ENCODE measurements at regions of chr9 and their contacts with region 1.

Region 1: DNA sequence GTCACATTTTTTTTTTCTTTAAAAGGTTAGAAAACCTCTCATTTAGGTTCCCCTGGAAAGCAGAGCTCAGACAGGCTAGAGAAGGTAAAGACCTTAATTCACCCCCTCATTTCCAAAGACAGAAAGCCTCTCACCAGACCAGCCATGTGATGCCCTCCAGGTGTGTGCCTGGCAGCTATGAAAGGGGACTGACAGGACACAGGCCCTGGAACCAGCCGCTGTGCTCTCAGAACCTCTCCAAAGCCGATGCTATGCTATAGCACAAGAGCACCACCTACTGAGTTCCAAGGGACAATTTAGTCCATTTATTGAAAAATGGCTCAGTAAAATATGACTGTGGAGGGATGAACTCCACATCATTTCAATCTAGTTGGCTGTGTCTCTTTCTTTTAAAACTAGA is 48.8 kb downstream of the FANCC start:
- DNase-seq: peak in 1 of 9 experiments; percentile 10
- ATAC-seq: no peak
- H3K4me3 ChIP-seq: no peak overlapping the region
- H3K4me3 Mint-ChIP-seq: no peak overlapping the region
- H3K27ac ChIP-seq: no peak overlapping the region
- H3K27ac Mint-ChIP-seq: no peak overlapping the region
- H3K4me1 ChIP-seq: no peaks in the 10 kb centered on the region
- H3K4me1 Mint-ChIP-seq: peaks cover 16% of the 10 kb centered on the region
- H3K27me3 ChIP-seq: no peaks in the 10 kb centered on the region
- H3K27me3 Mint-ChIP-seq: no peaks in the 10 kb centered on the region
- CTCF ChIP-seq: no peak

Region 2: GRCh38 chr9:95336281-95336680 is 67.6 kb after region 1 on chr9:
- CTCF ChIA-PET with region 1: interaction called, 13 read pairs
- POLR2A ChIA-PET with region 1: no interaction called
- intact Hi-C with region 1: no loop called
- DNase-seq: peak in 6 of 9 experiments; percentile 11 to 59 (median 32)
- ATAC-seq: peak; percentile 70
- H3K4me3 ChIP-seq: no peak overlapping the region
- H3K4me3 Mint-ChIP-seq: no peak overlapping the region
- H3K27ac ChIP-seq: no peak overlapping the region
- H3K27ac Mint-ChIP-seq: no peak overlapping the region
- H3K4me1 ChIP-seq: no peaks in the 10 kb centered on the region
- H3K4me1 Mint-ChIP-seq: no peaks in the 10 kb centered on the region
- H3K27me3 ChIP-seq: peaks cover 0 to 2% of the 10 kb centered on the region in 2 experiments
- H3K27me3 Mint-ChIP-seq: peaks cover 5% of the 10 kb centered on the region
- CTCF ChIP-seq: peak; percentile 66